ENCODE measurements at regions of chr19 and their contacts with region 1.

Region 1: GRCh38 chr19:5697022-5697889 is 7.2 kb downstream of the RPL36 start:
- DNase-seq: no peak
- ATAC-seq: peak; percentile 17
- H3K4me3 ChIP-seq: no peak overlapping the region
- H3K27ac ChIP-seq: peak overlapping the region; percentile 31
- H3K4me1 ChIP-seq: peaks cover 12% of the 10 kb centered on the region
- H3K27me3 ChIP-seq: no peaks in the 10 kb centered on the region
- CTCF ChIP-seq: no peak

Region 2: DNA sequence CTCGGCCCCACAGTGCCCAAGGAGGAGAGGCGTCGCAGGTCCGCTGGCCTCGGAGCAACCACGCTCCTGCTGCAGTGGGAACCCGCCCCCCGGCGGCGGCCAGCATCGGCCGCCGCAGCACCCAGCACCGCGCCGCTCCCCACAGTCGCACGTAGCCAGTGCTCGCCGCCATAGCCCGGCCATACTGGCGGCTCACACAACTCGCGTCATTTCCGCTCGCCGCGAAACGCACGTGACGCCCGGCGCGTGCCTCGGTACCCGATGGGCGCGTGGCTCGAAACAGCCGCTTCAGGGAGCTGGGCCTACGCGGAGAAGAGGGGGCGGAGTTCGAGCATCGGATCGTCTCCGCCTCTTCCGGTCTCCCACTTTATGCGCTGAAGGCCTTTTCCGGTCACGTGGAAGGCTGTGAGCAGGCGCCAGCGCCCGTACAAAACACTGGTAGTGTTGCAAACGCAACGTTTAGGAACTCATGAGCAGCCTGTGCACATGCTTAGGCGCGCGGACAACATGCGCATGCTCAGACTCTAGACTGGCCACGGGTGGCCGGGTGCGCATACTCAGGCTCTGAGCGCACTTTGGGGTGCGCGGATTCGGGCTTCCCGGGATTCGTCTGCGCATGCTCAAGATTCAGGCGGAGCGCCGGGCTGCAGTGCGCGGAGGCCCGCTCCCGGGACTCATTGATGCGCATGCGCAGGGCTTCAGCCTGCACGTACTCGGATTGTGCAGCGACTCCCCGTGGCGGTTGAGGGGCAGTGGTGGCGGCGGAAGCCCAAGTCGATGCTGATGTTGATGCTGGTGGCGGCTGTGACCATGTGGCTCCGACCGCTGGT is 22.9 kb after region 1 on chr19 and contains the starts of genes CATSPERD and LONP1:
- CTCF ChIA-PET with region 1: no interaction called
- POLR2A ChIA-PET with region 1: interaction called, 12 read pairs
- in situ Hi-C with region 1: no loop called
- intact Hi-C with region 1: no loop called
- DNase-seq: peak; percentile 87
- ATAC-seq: peak; percentile 97
- H3K4me3 ChIP-seq: peak within 1 kb of the TSS; percentile 96 to 98
- H3K27ac ChIP-seq: peak within 1 kb of the TSS; percentile 96
- H3K4me1 ChIP-seq: peaks cover 8% of the 10 kb centered on the region; the same call in 1 of the 2 replicates
- H3K27me3 ChIP-seq: no peaks in the 10 kb centered on the region
- CTCF ChIP-seq: peak; percentile 90
- total RNA-seq, gene CATSPERD: 0.08 TPM
- total RNA-seq, gene LONP1: 93.0 TPM

Region 3: GRCh38 chr19:7004313-7004931 is 1307.2 kb after region 1 on chr19:
- CTCF ChIA-PET with region 1: no interaction called
- POLR2A ChIA-PET with region 1: no interaction called
- in situ Hi-C with region 1: no loop called
- intact Hi-C with region 1: no loop called
- DNase-seq: peak; percentile 20
- ATAC-seq: peak; percentile 73; the same call in 1 of the 2 replicates
- H3K4me3 ChIP-seq: no peak overlapping the region
- H3K27ac ChIP-seq: no peak overlapping the region
- H3K4me1 ChIP-seq: no peaks in the 10 kb centered on the region
- H3K27me3 ChIP-seq: peaks cover 2% of the 10 kb centered on the region; the same call in 1 of the 2 replicates
- CTCF ChIP-seq: peak; percentile 80

Measured in Panc1 (cell line).